SK-N-SH (cell line): ENCODE measurements at regions of chr1 and their contacts with region 1.

Region 1: DNA sequence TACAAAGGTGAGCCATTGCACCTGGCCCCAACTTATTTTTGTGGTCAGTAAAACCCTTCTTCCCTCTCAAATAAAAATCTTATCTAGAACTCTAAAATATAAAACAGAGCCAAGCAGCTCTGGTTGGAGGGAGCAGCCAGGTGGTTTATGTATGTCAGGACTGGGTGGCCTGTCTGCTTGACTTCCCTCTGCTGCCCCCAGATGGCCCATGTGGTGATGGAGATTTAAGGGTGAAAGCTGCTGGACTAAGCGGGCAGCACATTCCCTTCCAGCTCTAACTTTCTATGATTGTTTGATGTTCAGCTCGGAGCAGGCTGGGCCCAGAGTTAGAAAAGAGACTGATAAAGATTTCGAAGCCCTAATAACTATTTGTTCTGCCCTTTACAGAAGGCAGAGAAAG is 11.9 kb upstream of the PAQR6 start:
- DNase-seq: peak; percentile 64
- H3K4me3 ChIP-seq: no peak overlapping the region
- H3K27ac ChIP-seq: peak overlapping the region in 1 of 2 experiments; percentile 36; a peak in 2 of 4 replicates
- H3K4me1 ChIP-seq: peaks cover 11 to 27% of the 10 kb centered on the region in 2 experiments; a peak in 3 of 4 replicates
- H3K27me3 ChIP-seq: no peaks in the 10 kb centered on the region
- CTCF ChIP-seq: peak; percentile 32; the same call in 1 of the 2 replicates
- EP300 ChIP-seq: peak in 1 of 2 experiments; percentile 21; a peak in 1 of 4 replicates
- RAD21 ChIP-seq: peak; percentile 79

Region 2: GRCh38 chr1:156136970-156137483 is 122.8 kb before region 1 on chr1:
- CTCF ChIA-PET with region 1: interaction called, 12 read pairs
- POLR2A ChIA-PET with region 1: no interaction called
- DNase-seq: no peak
- H3K4me3 ChIP-seq: no peak overlapping the region
- H3K27ac ChIP-seq: peak overlapping the region in 1 of 2 experiments; percentile 24; a peak in 1 of 4 replicates
- H3K4me1 ChIP-seq: no peaks in the 10 kb centered on the region
- H3K27me3 ChIP-seq: no peaks in the 10 kb centered on the region
- CTCF ChIP-seq: peak; percentile 39
- EP300 ChIP-seq: no peak
- RAD21 ChIP-seq: no peak

Region 3: GRCh38 chr1:156245451-156246232 is 14.2 kb before region 1 on chr1:
- CTCF ChIA-PET with region 1: interaction called, 14 read pairs
- POLR2A ChIA-PET with region 1: interaction called, 4 read pairs
- DNase-seq: peak; percentile 42
- H3K4me3 ChIP-seq: no peak overlapping the region
- H3K27ac ChIP-seq: peak overlapping the region in 1 of 2 experiments; percentile 62; a peak in 1 of 4 replicates
- H3K4me1 ChIP-seq: peaks cover 7 to 57% of the 10 kb centered on the region in 2 experiments; a peak in 2 of 4 replicates
- H3K27me3 ChIP-seq: no peaks in the 10 kb centered on the region
- CTCF ChIP-seq: no peak
- EP300 ChIP-seq: no peak
- RAD21 ChIP-seq: no peak

Region 4: DNA sequence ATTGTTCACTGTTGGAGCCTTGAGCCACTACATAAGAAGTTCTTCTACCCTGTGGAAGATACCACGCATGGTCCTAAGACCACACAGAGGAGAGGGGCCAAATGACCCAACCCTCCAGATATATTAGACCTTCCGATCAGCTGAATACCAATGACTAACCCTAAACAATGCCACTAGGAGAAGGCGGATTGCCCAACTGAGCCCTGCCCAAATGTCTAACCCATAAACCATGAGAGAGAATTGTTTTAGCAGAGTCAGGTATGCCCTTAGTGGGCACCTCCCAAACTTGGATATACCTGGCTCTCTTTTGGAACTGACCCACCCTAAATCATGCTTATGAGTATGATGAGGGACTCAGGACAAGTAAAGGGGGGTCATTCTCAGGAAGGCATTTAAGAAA is 10.5 kb after region 1 on chr1:
- CTCF ChIA-PET with region 1: interaction called, 24 read pairs
- POLR2A ChIA-PET with region 1: interaction called, 3 read pairs
- DNase-seq: no peak
- H3K4me3 ChIP-seq: no peak overlapping the region
- H3K27ac ChIP-seq: no peak overlapping the region
- H3K4me1 ChIP-seq: no peaks in the 10 kb centered on the region
- H3K27me3 ChIP-seq: no peaks in the 10 kb centered on the region
- CTCF ChIP-seq: no peak
- EP300 ChIP-seq: no peak
- RAD21 ChIP-seq: no peak

Region 5: GRCh38 chr1:156282479-156283222 is 22.8 kb after region 1 on chr1 and contains the start of gene SMG5:
- CTCF ChIA-PET with region 1: interaction called, 18 read pairs
- POLR2A ChIA-PET with region 1: interaction called, 7 read pairs
- DNase-seq: peak; percentile 96
- H3K4me3 ChIP-seq: peak within 1 kb of the TSS; percentile 67 to 87
- H3K27ac ChIP-seq: peak within 1 kb of the TSS; percentile 69 to 86
- H3K4me1 ChIP-seq: peaks cover 10 to 17% of the 10 kb centered on the region in 2 experiments; a peak in 2 of 4 replicates
- H3K27me3 ChIP-seq: no peaks in the 10 kb centered on the region
- CTCF ChIP-seq: no peak
- EP300 ChIP-seq: peak in 1 of 2 experiments; percentile 61; a peak in 1 of 4 replicates
- RAD21 ChIP-seq: no peak
- polyA plus RNA-seq, gene SMG5: 21.3 and 28.2 TPM in 2 replicates

Region 6: GRCh38 chr1:156540791-156541383 is 281.1 kb after region 1 on chr1:
- CTCF ChIA-PET with region 1: no interaction called
- POLR2A ChIA-PET with region 1: no interaction called
- DNase-seq: no peak
- H3K4me3 ChIP-seq: no peak overlapping the region
- H3K27ac ChIP-seq: no peak overlapping the region
- H3K4me1 ChIP-seq: no peaks in the 10 kb centered on the region
- H3K27me3 ChIP-seq: no peaks in the 10 kb centered on the region
- CTCF ChIP-seq: no peak
- EP300 ChIP-seq: no peak
- RAD21 ChIP-seq: no peak